Prostate gland (tissue), 2 donors: ENCODE measurements at regions of chr7 and their contacts with region 1.

Region 1: DNA sequence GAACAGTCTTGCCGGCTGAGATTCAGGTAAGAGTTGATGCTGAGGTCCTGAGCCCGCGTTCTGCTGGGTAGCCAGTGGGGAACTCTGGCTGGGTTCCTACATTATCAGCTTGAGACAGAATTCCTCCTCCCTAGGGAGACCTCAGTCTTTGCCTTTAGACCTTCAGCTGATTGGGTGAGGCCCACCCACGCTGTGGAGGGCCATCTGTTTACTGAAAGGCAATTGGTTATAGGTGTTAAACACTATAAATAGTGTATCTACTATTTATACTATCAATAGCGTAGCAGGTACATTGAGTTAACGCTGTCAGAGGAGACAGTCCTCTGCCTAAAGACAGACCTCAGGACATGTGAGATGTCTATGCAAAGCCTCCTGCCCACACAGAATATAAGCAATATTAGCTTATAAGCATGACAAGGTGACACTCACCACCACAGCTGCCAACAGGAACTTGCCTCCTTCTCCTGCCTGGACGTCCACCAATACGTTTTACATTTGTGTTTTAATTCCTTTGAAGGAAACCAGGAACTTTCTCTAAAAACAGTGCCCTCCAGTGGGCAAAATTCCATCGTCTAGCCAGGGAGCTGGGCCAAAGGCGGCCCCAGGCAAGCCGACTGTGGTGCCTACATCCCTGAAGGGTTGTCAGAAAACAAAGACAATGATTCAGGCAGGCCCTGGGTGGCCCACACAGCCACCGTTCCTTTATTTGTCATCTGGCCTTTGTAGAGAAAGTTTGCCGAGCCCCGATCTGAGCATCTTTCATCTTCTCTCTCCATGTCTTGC is 58.8 kb downstream of the INSIG1 start:
- DNase-seq: no peak
- H3K4me3 ChIP-seq: no peak overlapping the region
- H3K27ac ChIP-seq: no peak overlapping the region
- H3K4me1 ChIP-seq: no peaks in the 10 kb centered on the region
- H3K27me3 ChIP-seq: peaks cover 9% of the 10 kb centered on the region
- CTCF ChIP-seq: no peak
- POLR2A ChIP-seq: no peak

Region 2: DNA sequence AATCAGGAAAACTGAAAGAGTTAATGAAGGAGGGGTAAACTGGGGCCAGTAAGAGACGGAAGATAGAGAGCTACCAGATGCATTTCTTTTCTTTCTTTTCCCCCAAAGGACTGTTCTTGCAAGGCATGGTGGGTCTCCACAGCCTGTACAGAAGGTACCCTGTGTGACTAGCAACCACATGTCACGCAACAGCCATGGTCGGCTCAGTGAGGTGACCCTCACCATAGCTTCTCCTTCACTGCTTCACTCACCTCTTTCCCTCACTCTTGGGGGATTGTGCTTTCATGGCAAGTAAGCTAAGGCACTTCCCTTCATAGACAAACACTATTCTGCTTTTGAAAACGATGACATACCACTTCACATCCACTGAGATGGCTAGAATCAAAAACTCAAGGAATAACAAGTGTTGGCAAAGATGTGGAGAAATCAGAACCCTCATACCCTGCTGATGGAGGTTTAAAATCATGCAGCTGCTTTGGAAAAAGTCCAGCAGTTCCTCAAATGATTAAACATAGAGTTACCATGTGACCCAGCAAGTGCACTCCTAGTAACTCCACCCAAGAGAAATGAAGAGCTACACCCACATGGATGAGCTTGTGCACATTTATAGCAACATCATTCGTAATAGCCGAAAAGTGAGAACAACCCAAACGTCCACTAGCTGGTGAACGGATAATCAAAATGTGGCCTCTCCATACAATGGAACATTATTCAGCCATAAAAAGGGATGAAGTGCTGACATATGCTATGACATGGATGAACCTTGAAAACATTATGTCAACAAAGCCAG is 62.6 kb before region 1 on chr7:
- intact Hi-C with region 1: loop called (anchors 2 kb)
- DNase-seq: no peak
- H3K4me3 ChIP-seq: no peak overlapping the region
- H3K27ac ChIP-seq: no peak overlapping the region
- H3K4me1 ChIP-seq: no peaks in the 10 kb centered on the region
- H3K27me3 ChIP-seq: no peaks in the 10 kb centered on the region
- CTCF ChIP-seq: no peak
- POLR2A ChIP-seq: no peak

Region 3: DNA sequence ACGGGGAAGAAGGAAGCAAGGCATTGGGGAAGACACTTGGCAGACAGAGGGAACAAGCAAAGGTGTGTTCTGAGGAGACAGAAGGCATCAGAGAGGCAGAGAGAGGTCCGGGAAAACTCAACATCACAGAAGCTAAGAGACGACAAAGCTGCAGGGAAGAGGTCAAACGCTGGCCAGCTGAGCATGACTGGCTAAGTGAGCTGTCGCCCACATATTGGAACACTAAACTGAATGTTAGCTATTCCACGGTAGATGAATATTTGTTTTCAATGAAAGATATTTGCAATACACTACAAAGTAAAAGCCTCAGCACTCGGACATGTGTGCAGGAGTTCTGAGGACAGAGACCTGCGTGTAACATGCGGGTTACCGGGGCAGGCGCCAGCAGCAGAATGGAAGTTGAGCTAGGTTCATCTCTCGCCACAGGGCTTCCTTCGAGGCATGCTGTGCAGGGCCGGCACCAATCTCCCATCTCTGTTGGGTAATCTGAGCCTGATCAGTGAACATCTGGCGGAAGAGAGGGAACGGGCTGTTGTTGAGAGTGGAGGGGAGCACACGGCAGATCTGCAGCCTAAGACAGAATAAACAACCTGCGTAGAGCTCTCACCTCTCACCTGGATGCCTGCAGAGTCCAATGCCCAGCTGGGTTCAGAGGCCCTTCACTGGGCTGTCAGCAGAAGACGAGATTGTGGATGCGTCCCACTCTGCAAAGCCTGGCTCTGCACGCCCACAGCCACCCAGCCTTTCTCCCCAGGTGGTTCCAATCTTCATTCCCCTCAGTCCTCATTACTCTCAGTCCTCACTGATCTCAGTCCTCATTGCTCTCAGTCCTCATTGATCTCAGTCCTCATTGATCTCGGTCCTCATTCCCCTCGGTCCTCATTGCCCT is 22.9 kb before region 1 on chr7:
- intact Hi-C with region 1: no loop called
- DNase-seq: no peak
- H3K4me3 ChIP-seq: no peak overlapping the region
- H3K27ac ChIP-seq: no peak overlapping the region
- H3K4me1 ChIP-seq: no peaks in the 10 kb centered on the region
- H3K27me3 ChIP-seq: peaks cover 3% of the 10 kb centered on the region
- CTCF ChIP-seq: no peak
- POLR2A ChIP-seq: no peak

Region 4: DNA sequence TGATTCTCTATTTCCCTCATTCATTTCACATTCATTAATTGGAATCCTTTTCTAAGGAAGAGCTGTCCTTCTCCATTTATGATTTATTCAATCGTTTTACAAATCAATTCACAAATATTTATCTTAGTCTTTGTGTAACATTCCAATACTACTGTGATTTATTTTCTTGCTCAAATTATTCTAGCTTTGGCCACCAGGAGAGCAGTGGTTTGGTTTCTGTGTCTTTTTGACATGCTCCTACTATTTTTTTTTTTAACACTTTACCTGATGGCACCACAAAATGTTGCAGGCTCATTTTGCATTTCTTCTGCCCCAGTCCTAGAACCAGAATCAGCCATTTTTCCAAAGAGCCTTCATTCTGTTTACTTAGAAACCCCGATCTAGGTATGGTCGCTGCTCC is 274.6 kb after region 1 on chr7:
- intact Hi-C with region 1: no loop called
- DNase-seq: no peak
- H3K4me3 ChIP-seq: no peak overlapping the region
- H3K27ac ChIP-seq: no peak overlapping the region
- H3K4me1 ChIP-seq: no peaks in the 10 kb centered on the region
- H3K27me3 ChIP-seq: no peaks in the 10 kb centered on the region
- CTCF ChIP-seq: no peak
- POLR2A ChIP-seq: no peak